ENCODE measurements at regions of chr19 and their contacts with region 1.

Region 1: DNA sequence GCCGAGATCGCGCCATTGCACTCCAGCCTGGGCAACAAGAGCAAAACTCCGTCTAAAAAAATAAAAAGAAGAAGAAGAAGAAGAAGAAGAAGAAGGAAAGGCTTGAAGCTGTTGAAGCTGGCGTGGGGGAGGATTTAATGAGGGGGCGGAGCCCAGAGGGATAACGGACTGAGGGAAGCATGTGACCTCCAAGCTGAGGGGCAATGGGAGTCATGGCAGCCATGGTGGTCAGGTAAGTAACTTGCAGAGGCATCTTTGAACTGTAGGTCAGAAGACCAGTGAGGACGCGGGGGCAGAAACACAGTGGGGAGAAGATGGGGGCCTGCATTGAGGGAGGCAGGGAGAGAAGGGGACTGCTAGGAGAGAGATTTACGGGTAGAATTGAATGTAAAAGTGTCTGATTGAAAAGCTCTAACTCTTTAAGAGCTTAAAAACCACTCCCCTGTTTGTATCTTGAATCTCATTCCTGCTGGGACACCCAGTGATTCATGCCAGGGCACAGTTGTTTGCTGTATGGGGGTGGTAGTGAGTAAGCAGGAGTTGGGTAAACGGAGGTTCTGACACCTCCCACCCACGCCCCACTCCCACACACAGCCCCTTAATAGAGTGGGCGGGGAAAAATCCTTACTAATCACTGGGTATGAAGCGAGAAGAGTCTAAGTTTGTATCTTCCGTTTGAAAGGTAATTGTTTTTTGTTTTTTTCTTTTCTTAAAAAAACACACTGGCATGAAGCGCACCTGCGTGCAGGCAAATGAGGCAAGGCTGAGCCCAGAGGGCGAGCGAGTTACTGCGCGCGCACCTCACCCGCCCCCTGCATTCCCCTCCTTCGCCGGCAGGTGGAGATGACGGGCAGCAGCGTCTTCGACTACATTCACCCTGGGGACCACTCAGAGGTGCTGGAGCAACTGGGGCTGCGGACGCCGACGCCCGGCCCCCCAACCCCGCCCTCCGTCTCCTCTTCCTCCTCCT is 13.0 kb downstream of the TMEM160 start:
- DNase-seq: peak; percentile 99
- H3K4me3 Mint-ChIP-seq: peak overlapping the region; percentile 70
- H3K27ac Mint-ChIP-seq: peak overlapping the region; percentile 73
- H3K4me1 Mint-ChIP-seq: peaks cover 24% of the 10 kb centered on the region
- H3K27me3 Mint-ChIP-seq: peaks cover 11% of the 10 kb centered on the region
- CTCF ChIP-seq: peak; percentile 99

Region 2: GRCh38 chr19:46753420-46754155 is 281.8 kb before region 1 on chr19:
- CTCF ChIA-PET with region 1: no interaction called
- intact Hi-C with region 1: loop called (anchors 10 kb)
- DNase-seq: peak; percentile 60
- H3K4me3 Mint-ChIP-seq: no peak overlapping the region
- H3K27ac Mint-ChIP-seq: peak overlapping the region; percentile 8
- H3K4me1 Mint-ChIP-seq: no peaks in the 10 kb centered on the region
- H3K27me3 Mint-ChIP-seq: no peaks in the 10 kb centered on the region
- CTCF ChIP-seq: no peak

Region 3: DNA sequence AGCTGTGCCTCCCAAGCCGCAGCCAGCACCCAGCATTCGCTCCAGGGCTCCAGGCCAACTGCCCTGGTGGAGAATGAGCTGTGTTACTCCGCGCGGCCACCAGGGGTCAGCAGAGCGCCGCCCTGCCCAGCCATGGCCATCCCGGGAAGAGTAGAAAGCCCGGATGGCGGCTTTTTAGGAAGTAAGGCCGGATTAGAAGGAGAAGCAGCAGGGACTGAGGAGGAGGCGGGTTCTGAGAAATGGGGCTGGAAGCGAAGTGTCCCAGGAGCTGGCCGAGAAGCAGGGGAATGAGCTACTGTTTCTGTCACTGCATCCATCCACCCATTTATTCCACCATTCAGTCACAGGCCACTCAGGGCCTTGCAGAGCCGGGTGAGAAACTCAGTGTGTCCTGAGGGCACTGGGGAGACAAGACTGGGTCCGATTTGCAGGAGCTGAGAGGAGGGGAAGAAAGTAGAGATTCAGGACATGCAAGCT is 22.3 kb before region 1 on chr19:
- CTCF ChIA-PET with region 1: interaction called, 6 read pairs
- intact Hi-C with region 1: loop called (anchors 1 kb)
- DNase-seq: peak; percentile 91
- H3K4me3 Mint-ChIP-seq: no peak overlapping the region
- H3K27ac Mint-ChIP-seq: no peak overlapping the region
- H3K4me1 Mint-ChIP-seq: peaks cover 14% of the 10 kb centered on the region
- H3K27me3 Mint-ChIP-seq: no peaks in the 10 kb centered on the region
- CTCF ChIP-seq: peak; percentile 99

Region 4: DNA sequence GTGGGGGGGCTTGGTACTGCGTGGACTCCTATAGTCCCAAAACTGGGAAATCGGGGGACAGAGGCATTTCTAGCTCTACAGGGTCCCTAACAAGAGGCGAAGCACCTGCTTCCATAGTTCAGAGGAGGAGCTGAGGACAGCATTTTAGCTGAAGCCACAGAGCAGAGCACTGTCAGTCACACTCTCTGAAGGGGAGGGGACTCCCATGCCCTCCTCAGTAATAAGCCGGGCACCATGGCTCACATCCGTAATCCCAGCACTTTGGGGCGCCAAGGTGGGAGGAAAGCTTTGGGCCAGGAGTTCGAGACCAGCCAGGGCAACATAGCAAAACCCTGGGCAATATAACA is 12.0 kb before region 1 on chr19:
- CTCF ChIA-PET with region 1: no interaction called
- intact Hi-C with region 1: no loop called
- DNase-seq: no peak
- H3K4me3 Mint-ChIP-seq: peak overlapping the region; percentile 39
- H3K27ac Mint-ChIP-seq: no peak overlapping the region
- H3K4me1 Mint-ChIP-seq: no peaks in the 10 kb centered on the region
- H3K27me3 Mint-ChIP-seq: peaks cover 87% of the 10 kb centered on the region
- CTCF ChIP-seq: no peak

Region 5: GRCh38 chr19:47124937-47125668 is 89.7 kb after region 1 on chr19:
- CTCF ChIA-PET with region 1: interaction called, 7 read pairs
- intact Hi-C with region 1: loop called (anchors 1 kb)
- DNase-seq: peak; percentile 45
- H3K4me3 Mint-ChIP-seq: no peak overlapping the region
- H3K27ac Mint-ChIP-seq: peak overlapping the region; percentile 33
- H3K4me1 Mint-ChIP-seq: peaks cover 30% of the 10 kb centered on the region
- H3K27me3 Mint-ChIP-seq: no peaks in the 10 kb centered on the region
- CTCF ChIP-seq: peak; percentile 61